ENCODE measurements at regions of chr19 and their contacts with region 1.

Region 1: DNA sequence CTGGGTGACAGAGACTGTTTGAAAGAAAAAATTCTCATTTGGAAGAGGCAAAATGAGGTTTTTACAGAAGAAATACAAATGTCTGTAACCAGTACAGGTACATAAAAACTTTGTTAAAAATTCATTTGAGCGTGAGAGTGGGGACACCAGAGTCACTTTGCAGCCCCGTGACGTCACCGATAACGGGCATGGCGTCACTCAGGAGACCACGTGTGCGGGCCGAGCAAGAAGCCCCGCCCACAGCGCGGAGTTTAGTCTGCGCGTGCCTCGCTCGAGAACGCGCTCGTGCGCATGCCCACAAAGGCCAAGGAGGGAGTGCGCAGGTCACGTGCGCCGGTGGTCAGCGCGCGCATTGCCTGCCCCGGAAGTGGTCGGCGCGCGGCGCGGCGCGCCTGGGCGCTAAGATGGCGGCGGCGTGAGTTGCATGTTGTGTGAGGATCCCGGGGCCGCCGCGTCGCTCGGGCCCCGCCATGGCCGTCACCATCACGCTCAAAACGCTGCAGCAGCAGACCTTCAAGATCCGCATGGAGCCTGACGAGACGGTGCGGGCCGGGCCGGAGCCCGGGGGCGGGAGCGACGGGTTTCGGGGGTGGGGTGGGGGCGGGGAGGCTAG is at the start of gene RAD23A:
- DNase-seq: peak; percentile 99
- H3K4me3 Mint-ChIP-seq: peak within 1 kb of the TSS; percentile 84
- H3K27ac Mint-ChIP-seq: peak within 1 kb of the TSS; percentile 94
- H3K4me1 Mint-ChIP-seq: peaks cover 15% of the 10 kb centered on the region
- H3K27me3 Mint-ChIP-seq: no peaks in the 10 kb centered on the region
- CTCF ChIP-seq: no peak
- total RNA-seq, gene RAD23A: 197 and 219 TPM in 2 replicates

Region 2: DNA sequence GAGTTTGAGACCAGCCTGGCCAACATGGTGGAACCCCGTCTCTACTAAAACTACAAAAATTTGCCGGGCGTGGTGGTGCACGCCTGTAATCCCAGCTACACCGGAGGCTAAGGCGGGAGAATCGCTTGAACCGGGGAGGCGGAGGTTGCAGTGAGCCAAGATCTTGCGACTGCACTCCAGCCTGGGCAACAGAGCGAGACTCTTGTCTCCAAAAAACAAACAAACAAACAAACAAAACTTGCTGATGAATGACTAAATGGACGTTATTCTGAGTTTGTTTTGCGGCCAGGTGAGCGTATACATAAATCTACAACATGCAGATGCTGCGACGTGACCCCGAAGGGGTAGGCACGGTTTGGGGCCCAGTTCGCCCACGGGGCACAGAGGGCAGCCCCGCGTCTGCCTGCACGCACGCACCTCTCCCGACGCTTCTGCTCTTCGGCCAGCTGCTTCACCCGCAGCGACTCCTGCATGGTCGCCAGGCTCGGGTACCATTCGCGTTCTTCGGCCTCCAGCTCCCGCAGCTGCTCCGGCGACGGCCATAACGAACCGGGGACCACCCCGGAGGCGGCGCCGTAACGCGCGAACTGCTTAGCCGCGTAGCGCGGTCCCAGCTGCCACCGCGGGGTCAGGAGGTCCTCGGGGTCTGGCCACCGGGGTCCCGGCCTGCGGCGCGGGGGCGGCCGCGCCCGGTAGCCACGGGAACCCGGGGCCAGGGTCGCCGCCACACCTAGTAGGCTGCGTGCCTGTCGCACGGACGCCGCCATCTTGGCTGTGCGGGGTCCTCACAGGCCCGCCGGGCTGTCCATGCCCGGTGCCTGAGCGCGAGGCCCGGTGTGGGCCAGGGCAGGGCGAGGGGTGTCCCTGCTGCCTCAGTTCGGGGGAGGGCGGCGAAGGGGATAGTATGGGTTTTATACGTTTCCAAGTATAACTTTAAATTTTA is 11.1 kb after region 1 on chr19 and contains the start of gene GADD45GIP1:
- CTCF ChIA-PET with region 1: no interaction called
- POLR2A ChIA-PET with region 1: interaction called, 51 read pairs
- intact Hi-C with region 1: no loop called
- DNase-seq: peak; percentile 80
- H3K4me3 Mint-ChIP-seq: peak within 1 kb of the TSS; percentile 83
- H3K27ac Mint-ChIP-seq: peak within 1 kb of the TSS; percentile 89
- H3K4me1 Mint-ChIP-seq: peaks cover 23% of the 10 kb centered on the region
- H3K27me3 Mint-ChIP-seq: no peaks in the 10 kb centered on the region
- CTCF ChIP-seq: no peak
- total RNA-seq, gene GADD45GIP1: 44.4 and 47.5 TPM in 2 replicates

Region 3: GRCh38 chr19:13085666-13086065 is 140.1 kb after region 1 on chr19:
- CTCF ChIA-PET with region 1: no interaction called
- POLR2A ChIA-PET with region 1: no interaction called
- intact Hi-C with region 1: no loop called
- DNase-seq: no peak
- H3K4me3 Mint-ChIP-seq: no peak overlapping the region
- H3K27ac Mint-ChIP-seq: peak overlapping the region; percentile 70
- H3K4me1 Mint-ChIP-seq: no peaks in the 10 kb centered on the region
- H3K27me3 Mint-ChIP-seq: no peaks in the 10 kb centered on the region
- CTCF ChIP-seq: no peak